GM13977 (cell line): ENCODE measurements at regions of chr11 and their contacts with region 1.

Region 1: DNA sequence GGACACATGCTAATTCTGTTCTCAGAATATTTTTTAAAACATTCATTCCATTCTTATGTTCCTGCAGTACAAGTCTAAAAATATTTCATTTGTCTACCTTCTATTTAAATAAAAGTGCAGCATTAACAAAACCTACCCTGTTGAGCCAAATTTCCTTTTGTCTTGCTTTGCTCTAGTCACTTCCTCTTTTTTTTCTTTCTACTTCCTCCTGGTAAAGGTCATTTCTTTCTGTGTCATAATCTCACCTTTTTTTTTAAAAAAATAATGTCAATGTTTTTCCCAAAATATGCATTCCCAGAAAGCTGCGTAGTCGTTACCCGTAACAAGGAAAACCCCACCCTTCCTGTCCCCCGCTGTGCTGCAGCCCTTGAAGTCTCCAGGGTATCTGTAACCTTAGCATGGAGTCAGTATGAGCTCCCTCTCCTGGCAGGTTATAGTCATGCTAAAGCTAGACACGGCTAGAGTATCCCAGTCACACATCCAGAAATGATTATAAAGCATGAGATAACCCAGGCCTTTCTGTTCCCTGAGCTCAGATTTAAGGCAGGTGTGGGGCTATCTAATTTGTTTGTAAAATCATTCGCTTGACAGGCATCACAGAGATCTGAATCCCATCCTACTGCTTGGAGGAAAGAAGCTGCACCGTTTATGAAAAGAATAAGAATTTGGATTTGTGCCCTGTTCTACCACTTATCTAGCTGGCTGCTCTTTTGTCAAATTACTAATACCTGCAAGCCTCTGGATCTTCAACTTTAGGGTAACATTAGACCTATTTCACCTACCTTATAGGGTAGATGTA is 51.1 kb upstream of the EED start:
- DNase-seq: peak; percentile 82
- CTCF ChIP-seq: peak; percentile 80

Region 2: GRCh38 chr11:86041975-86042378 is 151.5 kb before region 1 on chr11:
- in situ Hi-C with region 1: loop called (anchors 10 kb)
- DNase-seq: peak; percentile 50
- CTCF ChIP-seq: peak; percentile 80

Region 3: GRCh38 chr11:86355256-86355655 is 161.8 kb after region 1 on chr11:
- in situ Hi-C with region 1: no loop called
- DNase-seq: no peak
- CTCF ChIP-seq: no peak